ENCODE measurements at regions of chr11 and their contacts with region 1.

Region 1: DNA sequence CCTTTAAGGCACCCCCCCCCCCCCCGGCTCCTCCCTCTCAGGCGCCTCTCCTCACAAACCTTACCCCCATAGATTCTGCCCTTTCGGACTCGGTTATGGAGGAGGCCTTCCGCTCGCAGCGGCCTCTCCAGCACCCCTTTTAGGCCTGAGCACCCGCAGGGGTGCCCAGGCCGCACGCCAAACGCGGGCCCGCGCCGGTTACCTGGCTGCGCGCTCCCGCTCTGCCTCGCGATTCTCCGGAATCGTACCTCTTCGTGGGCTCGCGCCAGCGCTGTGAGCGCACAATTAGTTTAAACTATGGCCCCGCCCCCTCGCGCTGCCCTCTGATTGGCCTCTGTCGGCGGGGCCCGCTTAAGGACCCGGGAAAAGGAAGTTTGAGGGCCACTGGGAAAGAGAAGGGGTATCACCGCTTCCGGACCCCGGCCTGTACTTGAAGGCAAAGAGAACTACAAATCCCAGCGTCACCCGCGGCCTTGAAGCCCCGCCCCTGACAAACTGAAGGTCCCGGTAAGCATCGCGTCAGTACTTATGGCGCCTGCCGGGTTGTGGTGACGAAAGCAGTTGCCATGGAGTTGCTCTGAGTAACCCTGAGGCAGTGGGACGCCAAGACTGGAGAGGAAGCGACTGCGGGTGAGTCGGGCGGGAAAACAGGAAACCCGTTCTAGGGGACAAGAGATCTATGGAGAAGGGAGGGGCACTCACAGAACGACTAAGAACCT is at the starts of genes LRRC51 and NUMA1:
- DNase-seq: peak; percentile 99
- H3K4me3 Mint-ChIP-seq: peak within 1 kb of the TSS; percentile 90
- H3K27ac Mint-ChIP-seq: peak within 1 kb of the TSS; percentile 92
- H3K4me1 Mint-ChIP-seq: peaks cover 40% of the 10 kb centered on the region
- H3K27me3 Mint-ChIP-seq: no peaks in the 10 kb centered on the region
- total RNA-seq, gene LRRC51: 7.9 and 9.2 TPM in 2 replicates
- total RNA-seq, gene NUMA1: 162 and 174 TPM in 2 replicates

Region 2: GRCh38 chr11:71928737-71929452 is 151.5 kb before region 1 on chr11 and contains the start of gene RNF121:
- intact Hi-C with region 1: loop called (anchors 2 kb)
- DNase-seq: peak; percentile 97
- H3K4me3 Mint-ChIP-seq: peak within 1 kb of the TSS; percentile 91
- H3K27ac Mint-ChIP-seq: peak within 1 kb of the TSS; percentile 99
- H3K4me1 Mint-ChIP-seq: peaks cover 32% of the 10 kb centered on the region
- H3K27me3 Mint-ChIP-seq: no peaks in the 10 kb centered on the region
- total RNA-seq, gene RNF121: 49.1 and 51.3 TPM in 2 replicates

Region 3: GRCh38 chr11:72102946-72103753 is 22.7 kb after region 1 on chr11 and contains the start of gene LAMTOR1:
- intact Hi-C with region 1: loop called (anchors 1 kb)
- DNase-seq: peak; percentile 97
- H3K4me3 Mint-ChIP-seq: peak within 1 kb of the TSS; percentile 95
- H3K27ac Mint-ChIP-seq: peak within 1 kb of the TSS; percentile 96
- H3K4me1 Mint-ChIP-seq: peaks cover 32% of the 10 kb centered on the region
- H3K27me3 Mint-ChIP-seq: no peaks in the 10 kb centered on the region
- total RNA-seq, gene LAMTOR1: 95.1 and 100 TPM in 2 replicates

Region 4: DNA sequence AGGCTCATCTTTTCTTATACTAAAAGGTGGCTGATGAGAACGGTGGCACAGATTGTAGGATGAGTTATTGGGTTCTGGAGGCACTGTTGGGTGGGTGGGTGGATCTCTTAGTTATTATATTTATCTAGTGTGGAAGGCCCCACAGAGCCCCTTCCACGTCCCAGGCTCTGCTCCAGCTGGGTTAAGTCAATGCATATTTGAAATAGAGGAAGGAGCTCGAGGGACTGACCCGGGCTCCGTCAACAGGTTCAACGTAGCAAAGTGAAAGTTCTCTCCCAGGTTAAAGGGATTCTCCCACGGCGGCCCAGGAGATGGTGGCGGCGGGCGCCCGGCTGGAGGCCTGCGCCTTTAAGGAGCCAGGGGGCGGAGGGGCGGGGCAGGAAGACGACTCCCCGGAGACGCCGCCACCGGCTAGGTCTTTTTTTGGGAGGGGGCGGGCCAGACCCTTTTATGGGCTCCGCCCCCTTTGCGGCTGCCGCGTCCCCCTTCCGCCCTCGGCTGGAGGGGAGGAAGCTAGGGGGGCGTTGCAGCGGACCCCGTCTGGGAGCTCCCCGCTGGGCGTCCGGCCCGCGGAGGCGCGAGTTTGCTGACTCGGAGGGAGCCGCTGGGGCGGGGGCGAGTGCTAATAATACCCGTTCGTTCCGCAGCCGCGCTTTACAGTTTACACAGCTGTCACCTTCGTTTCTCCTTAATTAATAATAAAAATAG is 142.6 kb after region 1 on chr11:
- intact Hi-C with region 1: loop called (anchors 1 kb)
- DNase-seq: peak; percentile 95
- H3K4me3 Mint-ChIP-seq: peak overlapping the region; percentile 80
- H3K27ac Mint-ChIP-seq: peak overlapping the region; percentile 77
- H3K4me1 Mint-ChIP-seq: peaks cover 23% of the 10 kb centered on the region
- H3K27me3 Mint-ChIP-seq: peaks cover 2% of the 10 kb centered on the region

Measured in activated T-helper 2 cell treated with anti-CD3 and anti-CD28 coated beads, Interferon-gamma antibody, Interleukin-2, Interleukin-4, amounts not matched to agents 10 μg/mL and 5 μg/mL and 100 μg/mL, durations not matched to agents 14 hours and 24 hours and 36 hours (primary cell).